ENCODE measurements at regions of chr20 and their contacts with region 1.

Region 1: DNA sequence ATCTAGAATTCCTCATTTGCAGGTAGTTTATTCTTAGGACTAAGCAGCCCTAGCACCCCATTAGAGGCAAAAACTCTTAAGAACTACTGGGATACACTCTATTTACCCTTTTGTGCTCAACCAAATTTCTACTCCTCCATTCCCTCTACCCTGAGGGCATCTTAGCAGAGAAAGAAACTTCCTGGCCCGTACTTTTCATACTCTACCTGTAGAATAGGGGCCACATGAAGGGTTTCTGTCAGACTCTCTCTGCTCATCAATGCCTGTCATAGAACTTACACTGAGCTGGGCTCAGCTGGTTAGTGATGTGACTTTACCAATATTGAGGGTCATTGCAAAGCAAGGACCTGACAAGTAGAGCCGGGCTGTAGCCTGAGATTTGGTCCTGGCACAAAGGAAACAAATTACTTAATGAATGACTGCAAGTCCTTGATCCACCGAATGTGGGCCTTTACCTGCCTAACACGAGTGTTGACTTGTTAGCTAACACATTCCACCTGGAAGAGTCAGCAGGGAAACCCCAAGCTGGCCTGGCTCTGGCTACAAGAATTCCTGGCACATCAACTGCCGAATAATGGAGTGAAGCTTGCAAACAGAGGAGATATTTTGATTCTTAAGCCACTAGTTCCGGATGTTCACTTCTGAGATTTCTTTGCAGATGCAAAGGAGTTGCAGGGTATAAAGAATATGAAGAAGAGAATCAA is 280.5 kb upstream of the JAG1 start:
- DNase-seq: peak; percentile 6
- H3K4me3 ChIP-seq: no peak overlapping the region
- CTCF ChIP-seq: no peak

Region 2: DNA sequence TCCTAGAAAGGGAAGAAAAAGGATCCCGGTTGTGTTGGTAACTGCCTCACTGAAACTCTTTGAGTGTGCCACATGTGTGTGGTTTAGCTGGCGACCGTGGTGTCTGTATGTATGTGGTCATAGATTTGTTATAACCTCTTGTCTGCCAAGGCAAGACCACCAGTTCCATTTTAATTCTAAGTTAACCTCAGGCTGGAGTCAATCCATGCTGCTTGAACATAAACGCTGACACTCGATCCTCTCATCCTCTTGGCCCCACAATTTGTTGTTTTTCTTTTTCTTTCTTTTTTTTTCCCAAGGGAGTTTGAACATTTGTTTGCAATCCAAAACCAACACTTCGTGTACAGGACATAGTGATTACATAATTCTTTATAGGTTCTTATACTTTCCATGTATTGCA is 38.4 kb after region 1 on chr20:
- in situ Hi-C with region 1: loop called (anchors 5 kb)
- DNase-seq: peak; percentile 33
- H3K4me3 ChIP-seq: no peak overlapping the region
- CTCF ChIP-seq: no peak